ENCODE measurements at regions of chr2 and their contacts with region 1.

Region 1: GRCh38 chr2:161104054-161104553 is 56.1 kb upstream of the TANK start:
- DNase-seq: no peak
- ATAC-seq: peak; percentile 88
- H3K4me3 Mint-ChIP-seq: peak overlapping the region; percentile 70
- H3K27ac Mint-ChIP-seq: peak overlapping the region; percentile 76
- H3K4me1 Mint-ChIP-seq: peaks cover 28% of the 10 kb centered on the region
- H3K27me3 Mint-ChIP-seq: no peaks in the 10 kb centered on the region
- CTCF ChIP-seq: no peak

Region 2: GRCh38 chr2:161063157-161063954 is 40.7 kb before region 1 on chr2:
- CTCF ChIA-PET with region 1: interaction called, 13 read pairs
- POLR2A ChIA-PET with region 1: no interaction called
- intact Hi-C with region 1: no loop called
- DNase-seq: peak; percentile 18
- ATAC-seq: peak; percentile 93
- H3K4me3 Mint-ChIP-seq: no peak overlapping the region
- H3K27ac Mint-ChIP-seq: no peak overlapping the region
- H3K4me1 Mint-ChIP-seq: peaks cover 4% of the 10 kb centered on the region
- H3K27me3 Mint-ChIP-seq: no peaks in the 10 kb centered on the region
- CTCF ChIP-seq: peak; percentile 94

Region 3: DNA sequence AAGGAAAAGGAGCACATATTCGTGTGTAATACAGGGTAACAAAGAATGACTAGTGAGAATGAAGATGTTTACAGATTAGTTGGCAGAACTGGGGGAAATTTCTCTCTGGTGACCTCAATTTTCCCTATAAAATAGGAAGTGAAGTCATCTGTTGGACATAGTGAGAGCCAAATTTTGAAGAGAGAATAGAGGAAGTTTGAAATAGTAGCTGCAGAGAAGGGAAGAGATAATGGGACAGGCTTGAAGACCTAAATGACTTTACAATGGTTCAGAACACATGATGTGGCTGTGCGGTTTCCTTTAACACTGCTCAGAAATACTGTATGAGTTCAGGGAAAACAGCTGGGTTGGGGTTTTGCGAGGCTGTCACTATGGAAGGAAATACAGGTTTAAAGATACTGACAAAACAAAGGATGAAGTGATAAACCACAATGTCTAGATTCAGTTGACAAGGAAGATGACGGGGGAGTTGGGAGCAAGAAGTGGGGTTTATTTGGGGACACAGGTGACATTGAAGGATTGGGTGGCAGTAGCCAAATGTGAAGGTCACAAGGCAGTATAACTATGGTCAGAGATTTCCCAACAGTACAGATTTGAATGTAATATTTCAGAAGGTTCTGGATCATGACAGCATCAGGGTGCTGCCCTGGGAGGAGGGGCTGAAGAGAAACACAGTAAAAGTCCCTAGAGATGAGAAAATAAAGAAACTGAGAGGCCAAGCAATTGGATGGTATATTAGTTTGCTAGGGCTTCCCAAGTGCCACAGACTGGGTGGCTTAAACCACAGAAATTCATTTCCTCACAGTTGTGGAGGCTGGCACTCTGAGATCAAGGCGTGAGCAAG is 26.5 kb before region 1 on chr2:
- CTCF ChIA-PET with region 1: no interaction called
- POLR2A ChIA-PET with region 1: interaction called, 4 read pairs
- intact Hi-C with region 1: loop called (anchors 2 kb)
- DNase-seq: no peak
- ATAC-seq: peak; percentile 87
- H3K4me3 Mint-ChIP-seq: peak overlapping the region; percentile 60
- H3K27ac Mint-ChIP-seq: peak overlapping the region; percentile 80
- H3K4me1 Mint-ChIP-seq: peaks cover 27% of the 10 kb centered on the region
- H3K27me3 Mint-ChIP-seq: no peaks in the 10 kb centered on the region
- CTCF ChIP-seq: no peak

Region 4: GRCh38 chr2:161090411-161090810 is 13.7 kb before region 1 on chr2:
- CTCF ChIA-PET with region 1: interaction called, 3 read pairs
- POLR2A ChIA-PET with region 1: no interaction called
- intact Hi-C with region 1: loop called (anchors 1 kb)
- DNase-seq: no peak
- ATAC-seq: no peak
- H3K4me3 Mint-ChIP-seq: peak overlapping the region; percentile 76
- H3K27ac Mint-ChIP-seq: peak overlapping the region; percentile 83
- H3K4me1 Mint-ChIP-seq: peaks cover 48% of the 10 kb centered on the region
- H3K27me3 Mint-ChIP-seq: no peaks in the 10 kb centered on the region
- CTCF ChIP-seq: no peak

Region 5: DNA sequence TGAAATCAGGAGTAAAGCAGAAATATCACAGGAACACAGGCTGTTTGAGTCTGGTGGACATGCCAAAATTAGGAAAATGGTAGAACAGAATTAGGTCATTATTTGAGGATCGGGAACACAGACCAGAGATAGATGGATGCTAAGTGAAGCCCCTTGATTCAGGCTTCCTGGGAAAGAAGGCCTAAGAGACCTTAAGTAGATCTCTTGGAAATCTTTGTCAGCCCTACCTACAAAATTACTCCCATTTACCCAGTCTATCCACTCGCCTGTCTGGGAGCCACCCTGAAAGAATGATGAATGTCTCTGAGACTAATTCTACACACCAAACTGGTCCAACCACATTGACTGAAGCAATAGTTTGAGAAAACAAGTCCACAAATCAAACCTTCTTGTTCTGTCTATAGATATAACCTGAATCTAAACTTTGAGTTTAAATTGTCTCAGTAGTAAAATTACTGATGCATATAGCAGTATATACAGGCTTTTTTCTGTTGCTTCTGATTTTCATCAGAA is 19.5 kb after region 1 on chr2:
- CTCF ChIA-PET with region 1: no interaction called
- POLR2A ChIA-PET with region 1: no interaction called
- intact Hi-C with region 1: loop called (anchors 2 kb)
- DNase-seq: no peak
- ATAC-seq: no peak
- H3K4me3 Mint-ChIP-seq: no peak overlapping the region
- H3K27ac Mint-ChIP-seq: no peak overlapping the region
- H3K4me1 Mint-ChIP-seq: peaks cover 36% of the 10 kb centered on the region
- H3K27me3 Mint-ChIP-seq: no peaks in the 10 kb centered on the region
- CTCF ChIP-seq: no peak

Measured in activated B cell treated with CpG ODN at 0.5 μM for 24 hours (primary cell).